Caco-2 (cell line): ENCODE measurements at regions of chr5 and their contacts with region 1.

Region 1: GRCh38 chr5:160467555-160468362 is 46.1 kb downstream of the PTTG1 start:
- DNase-seq: peak; percentile 70
- H3K4me3 ChIP-seq: peak overlapping the region; percentile 30
- H3K4me3 Mint-ChIP-seq: peak overlapping the region; percentile 72
- H3K27ac Mint-ChIP-seq: peak overlapping the region; percentile 67
- H3K4me1 ChIP-seq: peaks cover 43% of the 10 kb centered on the region
- H3K4me1 Mint-ChIP-seq: peaks cover 30% of the 10 kb centered on the region
- H3K27me3 ChIP-seq: no peaks in the 10 kb centered on the region
- H3K27me3 Mint-ChIP-seq: no peaks in the 10 kb centered on the region
- CTCF ChIP-seq: no peak

Region 2: DNA sequence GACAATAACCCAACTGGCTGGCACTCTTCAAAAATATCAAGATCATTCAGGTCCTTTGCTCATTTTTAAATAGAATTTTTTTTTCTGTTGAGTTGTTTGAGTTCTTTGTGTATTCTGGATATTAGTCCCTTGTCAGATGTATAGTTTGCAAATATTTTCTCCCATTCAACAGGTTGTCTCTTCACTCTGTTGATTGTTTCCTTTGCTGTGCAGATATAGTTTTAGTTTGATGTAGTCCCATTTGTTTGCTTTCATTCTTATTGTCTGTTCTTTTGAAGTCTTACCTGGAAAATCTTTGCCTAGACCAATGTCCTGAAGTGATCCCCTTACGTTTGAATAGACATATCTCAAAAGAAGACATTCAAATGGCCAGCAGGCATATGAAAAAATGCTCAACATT is 23.4 kb before region 1 on chr5:
- CTCF ChIA-PET with region 1: interaction called, 38 read pairs
- POLR2A ChIA-PET with region 1: no interaction called
- intact Hi-C with region 1: loop called (anchors 1 kb)
- DNase-seq: no peak
- H3K4me3 ChIP-seq: no peak overlapping the region
- H3K4me3 Mint-ChIP-seq: no peak overlapping the region
- H3K27ac Mint-ChIP-seq: no peak overlapping the region
- H3K4me1 ChIP-seq: no peaks in the 10 kb centered on the region
- H3K4me1 Mint-ChIP-seq: no peaks in the 10 kb centered on the region
- H3K27me3 ChIP-seq: no peaks in the 10 kb centered on the region
- H3K27me3 Mint-ChIP-seq: no peaks in the 10 kb centered on the region
- CTCF ChIP-seq: no peak

Region 3: DNA sequence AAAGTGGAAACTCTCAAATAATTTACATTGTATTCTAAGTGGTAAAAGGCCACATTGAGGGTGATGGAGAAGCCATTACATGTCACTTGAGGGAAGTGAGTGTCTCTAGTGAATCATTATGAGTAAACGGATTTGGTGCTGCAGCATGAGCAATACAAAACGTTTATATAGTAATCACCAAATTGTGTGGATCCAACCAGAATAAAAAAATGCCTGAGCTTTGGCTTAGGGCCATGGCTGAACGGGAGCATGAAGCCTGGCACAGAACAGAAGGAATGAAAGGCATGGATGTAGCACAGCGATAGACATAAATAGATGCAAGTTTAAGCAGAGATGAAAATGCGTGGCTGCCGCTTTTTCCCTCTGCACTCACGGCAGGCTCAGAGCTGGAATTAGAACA is 12.2 kb after region 1 on chr5:
- CTCF ChIA-PET with region 1: no interaction called
- POLR2A ChIA-PET with region 1: interaction called, 4 read pairs
- intact Hi-C with region 1: loop called (anchors 1 kb)
- DNase-seq: no peak
- H3K4me3 ChIP-seq: no peak overlapping the region
- H3K4me3 Mint-ChIP-seq: no peak overlapping the region
- H3K27ac Mint-ChIP-seq: no peak overlapping the region
- H3K4me1 ChIP-seq: peaks cover 64% of the 10 kb centered on the region
- H3K4me1 Mint-ChIP-seq: peaks cover 43% of the 10 kb centered on the region
- H3K27me3 ChIP-seq: no peaks in the 10 kb centered on the region
- H3K27me3 Mint-ChIP-seq: no peaks in the 10 kb centered on the region
- CTCF ChIP-seq: no peak

Region 4: GRCh38 chr5:160905285-160905684 is 437.5 kb after region 1 on chr5:
- CTCF ChIA-PET with region 1: no interaction called
- POLR2A ChIA-PET with region 1: no interaction called
- intact Hi-C with region 1: loop called (anchors 10 kb)
- DNase-seq: no peak
- H3K4me3 ChIP-seq: no peak overlapping the region
- H3K4me3 Mint-ChIP-seq: no peak overlapping the region
- H3K27ac Mint-ChIP-seq: no peak overlapping the region
- H3K4me1 ChIP-seq: peaks cover 60% of the 10 kb centered on the region
- H3K4me1 Mint-ChIP-seq: peaks cover 52% of the 10 kb centered on the region
- H3K27me3 ChIP-seq: no peaks in the 10 kb centered on the region
- H3K27me3 Mint-ChIP-seq: no peaks in the 10 kb centered on the region
- CTCF ChIP-seq: no peak